ENCODE measurements at regions of chr16 and their contacts with region 1.

Region 1: GRCh38 chr16:21599233-21600030 is at the start of gene METTL9:
- DNase-seq: peak; percentile 97
- H3K4me3 ChIP-seq: peak within 1 kb of the TSS; percentile 72 to 94 (median 86)
- H3K27ac ChIP-seq: peak within 1 kb of the TSS; percentile 93 to 97 (median 96)
- H3K4me1 ChIP-seq: peaks cover 0 to 38% (median 22%) of the 10 kb centered on the region in 4 donors
- H3K27me3 ChIP-seq: no peaks in the 10 kb centered on the region
- CTCF ChIP-seq: no peak
- EP300 ChIP-seq: no peak
- POLR2A ChIP-seq: peak; percentile 63 to 74
- total RNA-seq, gene METTL9: 108 to 155 (median 122) TPM

Region 2: GRCh38 chr16:21645261-21645721 is 45.9 kb after region 1 on chr16:
- intact Hi-C with region 1: loop called (anchors 5 kb)
- DNase-seq: no peak
- H3K4me3 ChIP-seq: peak overlapping the region in 3 of 4 donors; percentile 23 to 33 (median 30)
- H3K27ac ChIP-seq: peak overlapping the region; percentile 49 to 55 (median 50)
- H3K4me1 ChIP-seq: peaks cover 0 to 25% (median 8%) of the 10 kb centered on the region in 4 donors
- H3K27me3 ChIP-seq: no peaks in the 10 kb centered on the region
- CTCF ChIP-seq: no peak
- EP300 ChIP-seq: no peak
- POLR2A ChIP-seq: no peak

Region 3: DNA sequence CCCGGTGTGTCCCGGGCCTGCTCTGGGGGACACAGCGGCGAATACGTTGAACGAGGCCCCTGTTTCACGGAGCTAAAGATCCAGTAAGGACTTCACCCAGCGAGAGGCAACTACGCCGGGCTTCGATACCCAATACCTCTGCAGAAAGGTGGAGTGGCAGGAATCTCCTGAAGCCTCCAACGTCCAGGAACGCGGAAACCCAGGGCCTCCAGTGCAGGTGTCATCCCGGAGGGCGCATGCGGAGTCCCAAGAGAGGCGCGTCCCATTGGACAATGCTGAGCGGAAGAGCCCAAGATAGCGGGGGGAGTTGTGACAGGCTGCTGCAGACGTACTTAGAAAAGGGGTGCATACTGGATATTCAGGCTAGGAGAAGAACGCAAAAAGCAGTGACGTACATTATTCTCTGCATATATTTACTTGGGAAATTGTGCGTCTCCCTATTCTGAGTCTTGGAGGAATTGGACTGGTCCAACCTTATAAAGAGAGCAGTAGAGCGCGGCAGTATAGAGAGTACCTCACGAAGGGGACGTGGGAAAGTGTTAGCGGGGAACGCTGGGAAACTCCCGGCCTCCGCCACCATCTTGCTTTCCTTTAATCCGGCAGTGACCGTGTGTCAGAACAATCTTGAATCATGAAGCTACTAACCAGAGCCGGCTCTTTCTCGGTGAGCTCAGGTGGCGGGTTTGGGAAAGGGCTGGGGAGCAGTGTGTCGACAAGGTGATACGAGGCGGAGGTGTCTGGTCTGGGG is 353.5 kb after region 1 on chr16 and contains the start of gene UQCRC2:
- intact Hi-C with region 1: loop called (anchors 5 kb)
- DNase-seq: peak; percentile 93
- H3K4me3 ChIP-seq: peak within 1 kb of the TSS; percentile 78 to 91 (median 82)
- H3K27ac ChIP-seq: peak within 1 kb of the TSS; percentile 88 to 95 (median 90)
- H3K4me1 ChIP-seq: peaks cover 0 to 44% (median 36%) of the 10 kb centered on the region in 4 donors
- H3K27me3 ChIP-seq: no peaks in the 10 kb centered on the region
- CTCF ChIP-seq: no peak
- EP300 ChIP-seq: no peak
- POLR2A ChIP-seq: peak; percentile 59 to 90
- total RNA-seq, gene UQCRC2: 179 to 220 (median 205) TPM